ENCODE measurements at regions of chr6 and their contacts with region 1.

Region 1: DNA sequence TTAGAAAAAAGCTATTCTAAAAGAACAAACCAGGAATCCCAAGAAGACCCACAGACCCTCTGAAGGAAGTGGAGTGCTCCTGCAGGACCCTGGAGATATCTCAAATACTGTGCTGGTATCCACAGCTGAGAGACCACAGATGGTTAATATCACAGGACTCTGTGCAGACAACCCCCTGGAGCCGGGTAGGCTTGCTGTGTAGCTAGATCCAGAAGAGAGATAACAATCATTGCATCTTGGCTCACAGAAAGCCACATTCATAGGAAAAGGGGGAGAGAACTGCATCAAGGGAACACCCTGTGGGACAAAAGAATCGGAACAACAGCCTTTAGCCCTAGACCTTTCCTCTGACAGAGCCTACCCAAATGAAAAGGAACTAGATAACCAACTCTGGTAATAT is 689.5 kb downstream of the PHF3 start:
- DNase-seq: no peak
- H3K4me3 ChIP-seq: no peak overlapping the region
- H3K27ac ChIP-seq: no peak overlapping the region
- H3K4me1 ChIP-seq: no peaks in the 10 kb centered on the region
- H3K27me3 ChIP-seq: no peaks in the 10 kb centered on the region
- CTCF ChIP-seq: no peak
- POLR2A ChIP-seq: no peak

Region 2: GRCh38 chr6:63923139-63923739 is 401.9 kb before region 1 on chr6:
- intact Hi-C with region 1: loop called (anchors 10 kb)
- DNase-seq: no peak
- H3K4me3 ChIP-seq: no peak overlapping the region
- H3K27ac ChIP-seq: no peak overlapping the region
- H3K4me1 ChIP-seq: no peaks in the 10 kb centered on the region
- H3K27me3 ChIP-seq: no peaks in the 10 kb centered on the region
- CTCF ChIP-seq: peak in 5 of 6 experiments; percentile 35 to 66 (median 52)
- POLR2A ChIP-seq: no peak

Region 3: GRCh38 chr6:64404396-64404795 is 79.3 kb after region 1 on chr6:
- intact Hi-C with region 1: no loop called
- DNase-seq: no peak
- H3K4me3 ChIP-seq: no peak overlapping the region
- H3K27ac ChIP-seq: no peak overlapping the region
- H3K4me1 ChIP-seq: no peaks in the 10 kb centered on the region
- H3K27me3 ChIP-seq: no peaks in the 10 kb centered on the region
- CTCF ChIP-seq: no peak
- POLR2A ChIP-seq: no peak

Region 4: GRCh38 chr6:64477391-64477790 is 152.3 kb after region 1 on chr6:
- intact Hi-C with region 1: no loop called
- DNase-seq: no peak
- H3K4me3 ChIP-seq: no peak overlapping the region
- H3K27ac ChIP-seq: no peak overlapping the region
- H3K4me1 ChIP-seq: no peaks in the 10 kb centered on the region
- H3K27me3 ChIP-seq: no peaks in the 10 kb centered on the region
- CTCF ChIP-seq: no peak
- POLR2A ChIP-seq: no peak

Region 5: GRCh38 chr6:64520050-64520449 is 195.0 kb after region 1 on chr6:
- intact Hi-C with region 1: no loop called
- DNase-seq: no peak
- H3K4me3 ChIP-seq: no peak overlapping the region
- H3K27ac ChIP-seq: no peak overlapping the region
- H3K4me1 ChIP-seq: no peaks in the 10 kb centered on the region
- H3K27me3 ChIP-seq: no peaks in the 10 kb centered on the region
- CTCF ChIP-seq: no peak
- POLR2A ChIP-seq: no peak